ENCODE measurements at regions of chr4 and their contacts with region 1.

Region 1: DNA sequence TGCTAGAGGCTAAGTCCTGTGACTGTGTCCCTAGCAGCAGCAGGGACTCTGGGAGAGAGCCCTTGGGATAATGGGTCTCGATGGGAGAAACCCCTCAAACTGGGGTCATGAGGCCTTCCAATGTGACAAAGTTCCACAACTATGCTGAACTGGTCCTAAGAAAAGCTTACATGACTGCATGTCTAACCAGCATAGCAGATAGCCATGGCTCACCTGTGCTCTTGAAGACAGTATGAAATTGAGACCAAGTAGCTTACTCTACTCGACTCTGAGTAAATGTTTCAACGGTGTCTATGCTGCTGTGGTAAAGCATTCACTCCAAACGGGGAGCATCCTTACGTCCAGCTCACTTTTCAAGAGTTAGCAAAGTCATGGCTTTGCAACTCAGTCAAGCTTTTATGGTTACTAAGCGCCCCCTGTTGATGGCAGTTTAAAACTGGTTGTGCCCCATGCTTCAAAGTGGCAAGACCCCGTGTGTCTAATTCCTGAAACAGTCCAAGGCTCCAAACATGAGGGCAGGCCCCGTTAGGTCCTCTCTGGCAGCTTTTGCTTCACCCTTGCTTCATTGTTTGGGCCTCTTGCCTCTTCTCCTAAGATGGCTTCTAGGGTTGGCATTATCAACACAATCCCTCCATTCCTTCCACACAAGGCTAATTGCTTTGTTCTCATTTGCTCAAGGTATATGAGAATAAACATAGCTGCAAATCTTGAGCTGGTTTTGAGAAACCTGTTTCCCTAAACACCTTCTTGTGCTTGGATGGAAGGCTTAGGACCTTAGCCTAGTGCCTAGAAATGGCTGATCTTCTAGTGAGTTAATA is 46.6 kb downstream of the CCNG2 start:
- DNase-seq: peak; percentile 82
- ATAC-seq: peak; percentile 93
- H3K4me3 ChIP-seq: no peak overlapping the region
- H3K27ac ChIP-seq: no peak overlapping the region
- H3K4me1 ChIP-seq: no peaks in the 10 kb centered on the region
- H3K27me3 ChIP-seq: peaks cover 50% of the 10 kb centered on the region
- CTCF ChIP-seq: peak; percentile 86
- POLR2A ChIP-seq: no peak
- RAD21 ChIP-seq: peak; percentile 94

Region 2: GRCh38 chr4:76430519-76431388 is 772.8 kb before region 1 on chr4:
- CTCF ChIA-PET with region 1: interaction called, 4 read pairs
- POLR2A ChIA-PET with region 1: no interaction called
- dilution Hi-C with region 1: no loop called
- in situ Hi-C with region 1: loop called (anchors 25 kb)
- intact Hi-C with region 1: loop called (anchors 5 kb)
- DNase-seq: peak; percentile 60
- ATAC-seq: peak; percentile 72; the same call in 1 of the 2 replicates
- H3K4me3 ChIP-seq: no peak overlapping the region
- H3K27ac ChIP-seq: no peak overlapping the region
- H3K4me1 ChIP-seq: no peaks in the 10 kb centered on the region
- H3K27me3 ChIP-seq: peaks cover 21% of the 10 kb centered on the region
- CTCF ChIP-seq: peak; percentile 78
- POLR2A ChIP-seq: no peak
- RAD21 ChIP-seq: peak; percentile 76

Region 3: DNA sequence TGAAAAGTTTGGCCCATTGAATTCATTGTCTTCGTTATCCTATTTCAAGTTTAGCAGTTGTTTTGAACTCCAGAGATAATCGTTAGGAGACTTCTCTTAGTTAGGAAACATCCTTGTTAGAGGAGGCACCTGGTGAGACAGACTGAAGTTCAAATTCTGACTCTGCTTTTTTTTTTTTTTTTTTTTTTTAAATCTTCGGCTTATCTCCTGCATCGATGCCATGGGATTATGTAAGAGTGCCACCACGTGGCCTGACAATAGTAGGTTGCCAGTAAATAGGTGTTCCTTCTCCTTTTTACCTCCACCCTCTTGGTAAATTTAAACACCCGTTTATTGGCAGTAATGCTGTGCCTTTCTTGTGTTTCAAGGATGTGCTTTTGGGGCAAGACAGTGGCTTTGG is 454.9 kb before region 1 on chr4:
- CTCF ChIA-PET with region 1: no interaction called
- POLR2A ChIA-PET with region 1: no interaction called
- dilution Hi-C with region 1: no loop called
- in situ Hi-C with region 1: no loop called
- intact Hi-C with region 1: loop called (anchors 5 kb)
- DNase-seq: peak; percentile 41
- ATAC-seq: no peak
- H3K4me3 ChIP-seq: no peak overlapping the region
- H3K27ac ChIP-seq: no peak overlapping the region
- H3K4me1 ChIP-seq: peaks cover 11% of the 10 kb centered on the region
- H3K27me3 ChIP-seq: no peaks in the 10 kb centered on the region
- CTCF ChIP-seq: peak; percentile 41
- POLR2A ChIP-seq: no peak
- RAD21 ChIP-seq: peak; percentile 64

Region 4: DNA sequence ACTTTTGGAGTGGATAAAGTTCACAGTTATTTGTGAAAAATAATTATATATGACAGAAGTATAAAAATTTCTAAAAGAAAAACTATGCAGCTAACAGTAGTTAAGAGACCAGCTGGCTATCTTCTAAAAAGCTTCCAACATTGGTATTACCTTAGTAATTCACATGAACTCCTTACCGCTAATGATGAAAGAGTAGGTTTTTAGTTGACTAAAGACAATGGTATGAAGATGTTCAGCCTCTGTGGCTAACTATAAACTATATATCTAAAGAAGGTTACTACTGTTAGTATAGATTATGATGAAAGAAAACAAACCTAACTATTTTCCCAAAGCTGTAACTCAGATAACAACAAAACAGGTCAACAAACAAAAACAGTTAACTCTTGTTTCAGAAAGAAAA is 138.2 kb before region 1 on chr4:
- CTCF ChIA-PET with region 1: interaction called, 8 read pairs
- POLR2A ChIA-PET with region 1: no interaction called
- dilution Hi-C with region 1: no loop called
- in situ Hi-C with region 1: loop called (anchors 10 kb)
- intact Hi-C with region 1: no loop called
- DNase-seq: peak; percentile 80
- ATAC-seq: peak; percentile 58
- H3K4me3 ChIP-seq: no peak overlapping the region
- H3K27ac ChIP-seq: no peak overlapping the region
- H3K4me1 ChIP-seq: peaks cover 5% of the 10 kb centered on the region
- H3K27me3 ChIP-seq: no peaks in the 10 kb centered on the region
- CTCF ChIP-seq: no peak
- POLR2A ChIP-seq: no peak
- RAD21 ChIP-seq: no peak

Region 5: GRCh38 chr4:77095101-77095821 is 108.3 kb before region 1 on chr4:
- CTCF ChIA-PET with region 1: interaction called, 14 read pairs
- POLR2A ChIA-PET with region 1: no interaction called
- dilution Hi-C with region 1: no loop called
- in situ Hi-C with region 1: no loop called
- intact Hi-C with region 1: loop called (anchors 1 kb)
- DNase-seq: peak; percentile 31
- ATAC-seq: peak; percentile 96
- H3K4me3 ChIP-seq: no peak overlapping the region
- H3K27ac ChIP-seq: no peak overlapping the region
- H3K4me1 ChIP-seq: no peaks in the 10 kb centered on the region
- H3K27me3 ChIP-seq: no peaks in the 10 kb centered on the region
- CTCF ChIP-seq: peak; percentile 53
- POLR2A ChIP-seq: no peak
- RAD21 ChIP-seq: peak; percentile 34

Region 6: DNA sequence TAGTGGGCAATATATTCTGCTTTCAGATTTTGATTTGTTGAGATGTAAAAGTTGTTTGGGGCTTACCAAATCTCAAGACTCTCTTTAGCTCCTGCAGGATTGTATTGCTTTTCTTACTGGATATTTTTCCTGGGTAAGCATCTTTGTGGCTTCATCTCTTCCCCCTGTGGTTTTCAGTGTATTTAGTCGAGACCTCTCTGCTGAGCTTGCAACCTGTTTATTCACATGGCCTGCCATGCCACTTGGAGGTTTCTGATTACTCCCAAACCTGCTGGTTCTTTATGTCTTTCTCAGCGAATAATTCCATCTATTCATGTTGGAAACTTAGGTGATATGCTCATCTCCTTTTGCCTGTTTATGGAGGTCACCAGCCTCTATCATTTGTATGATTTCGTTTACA is 35.7 kb before region 1 on chr4:
- CTCF ChIA-PET with region 1: no interaction called
- POLR2A ChIA-PET with region 1: no interaction called
- dilution Hi-C with region 1: no loop called
- in situ Hi-C with region 1: no loop called
- intact Hi-C with region 1: no loop called
- DNase-seq: no peak
- ATAC-seq: no peak
- H3K4me3 ChIP-seq: no peak overlapping the region
- H3K27ac ChIP-seq: no peak overlapping the region
- H3K4me1 ChIP-seq: peaks cover 6% of the 10 kb centered on the region
- H3K27me3 ChIP-seq: no peaks in the 10 kb centered on the region
- CTCF ChIP-seq: no peak
- POLR2A ChIP-seq: no peak
- RAD21 ChIP-seq: no peak